WTC11 (cell line): ENCODE measurements at regions of chr11 and their contacts with region 1.

Region 1: DNA sequence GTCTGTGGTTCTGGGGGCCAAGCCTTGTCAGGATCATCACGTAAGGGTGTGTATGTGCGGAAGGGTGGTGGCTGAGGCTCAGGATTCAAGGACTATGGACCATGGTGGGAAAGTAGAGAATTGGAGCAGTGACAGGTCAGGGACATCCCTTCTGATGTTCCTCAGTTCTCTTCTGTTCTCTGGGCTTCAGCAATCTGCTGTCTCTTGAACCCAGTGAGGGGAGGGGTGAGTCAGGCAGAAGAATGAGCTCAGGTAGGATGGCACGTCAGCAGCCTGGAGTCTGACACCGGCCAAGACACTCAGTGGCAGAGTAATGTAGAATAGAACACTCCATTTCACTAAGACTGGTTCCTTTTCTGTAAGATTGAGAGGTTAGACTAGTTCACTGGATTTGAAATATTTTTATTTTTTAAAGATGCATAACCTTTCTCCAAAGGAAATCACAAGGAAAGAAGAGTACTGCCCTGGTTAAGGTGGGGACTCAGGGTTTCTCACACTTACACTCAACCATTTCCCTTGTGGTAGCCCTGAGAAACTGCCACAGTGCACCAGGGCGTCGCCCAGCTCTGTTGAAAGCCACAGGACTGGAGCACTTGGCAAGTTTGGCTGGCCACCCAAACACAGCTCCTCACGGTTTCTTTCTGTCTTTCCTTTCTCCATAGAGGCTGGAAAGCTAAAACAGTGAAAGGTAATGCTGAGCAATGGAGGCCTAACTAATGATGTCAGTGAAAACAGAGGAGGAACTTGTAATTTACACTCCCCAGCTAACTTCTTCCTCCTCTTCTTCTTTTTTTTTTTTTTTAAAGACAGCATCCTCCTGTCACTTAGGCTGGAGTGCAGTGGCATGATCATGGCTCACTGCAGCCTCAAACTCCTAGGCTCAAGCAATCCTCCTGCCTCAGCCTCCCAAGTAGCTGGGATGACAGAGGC is 23.1 kb upstream of the MICAL2 start:
- DNase-seq: no peak
- ATAC-seq: peak; percentile 50; the same call in 1 of the 2 replicates
- H3K4me3 Mint-ChIP-seq: no peak overlapping the region
- H3K27ac Mint-ChIP-seq: no peak overlapping the region
- H3K4me1 Mint-ChIP-seq: peaks cover 17% of the 10 kb centered on the region
- H3K27me3 Mint-ChIP-seq: no peaks in the 10 kb centered on the region
- CTCF ChIP-seq: no peak

Region 2: DNA sequence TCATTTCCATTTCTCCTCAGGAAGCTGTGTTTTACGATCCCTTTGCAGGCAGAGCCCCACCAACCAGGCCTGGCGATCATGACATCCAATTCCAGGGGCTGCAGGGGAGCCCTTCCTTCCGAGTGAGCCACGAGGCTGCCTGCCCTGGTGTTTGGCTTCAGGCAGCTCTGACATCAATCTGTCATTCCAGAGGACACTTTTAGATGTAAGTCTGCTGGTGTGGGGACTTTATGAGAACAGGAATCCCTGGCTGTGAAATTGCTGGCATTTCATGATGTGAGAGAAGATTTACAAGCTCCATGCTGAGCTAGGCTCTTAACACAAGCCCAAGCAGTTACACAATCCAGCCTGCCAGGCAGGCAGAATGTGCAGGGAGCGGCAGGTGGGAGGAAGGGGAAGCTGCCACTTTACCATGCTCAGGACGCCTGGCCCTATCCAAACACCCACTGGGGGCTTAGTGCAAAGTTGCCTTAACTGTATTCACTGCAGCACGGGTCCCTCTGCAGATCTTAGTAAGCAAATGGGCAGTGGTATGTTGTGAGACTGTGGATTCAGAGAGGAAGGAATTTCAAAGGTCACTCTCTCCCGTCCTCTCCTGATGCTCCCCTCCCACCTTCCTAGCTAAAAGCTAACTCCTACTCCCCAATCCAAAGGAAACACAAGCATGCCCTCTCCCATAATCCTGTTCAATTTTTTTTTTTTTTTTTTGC is 20.4 kb before region 1 on chr11:
- CTCF ChIA-PET with region 1: interaction called, 22 read pairs
- POLR2A ChIA-PET with region 1: no interaction called
- DNase-seq: no peak
- ATAC-seq: peak; percentile 78
- H3K4me3 Mint-ChIP-seq: no peak overlapping the region
- H3K27ac Mint-ChIP-seq: peak overlapping the region; percentile 4
- H3K4me1 Mint-ChIP-seq: peaks cover 26% of the 10 kb centered on the region
- H3K27me3 Mint-ChIP-seq: no peaks in the 10 kb centered on the region; the same call in 1 of the 2 replicates
- CTCF ChIP-seq: no peak

Region 3: DNA sequence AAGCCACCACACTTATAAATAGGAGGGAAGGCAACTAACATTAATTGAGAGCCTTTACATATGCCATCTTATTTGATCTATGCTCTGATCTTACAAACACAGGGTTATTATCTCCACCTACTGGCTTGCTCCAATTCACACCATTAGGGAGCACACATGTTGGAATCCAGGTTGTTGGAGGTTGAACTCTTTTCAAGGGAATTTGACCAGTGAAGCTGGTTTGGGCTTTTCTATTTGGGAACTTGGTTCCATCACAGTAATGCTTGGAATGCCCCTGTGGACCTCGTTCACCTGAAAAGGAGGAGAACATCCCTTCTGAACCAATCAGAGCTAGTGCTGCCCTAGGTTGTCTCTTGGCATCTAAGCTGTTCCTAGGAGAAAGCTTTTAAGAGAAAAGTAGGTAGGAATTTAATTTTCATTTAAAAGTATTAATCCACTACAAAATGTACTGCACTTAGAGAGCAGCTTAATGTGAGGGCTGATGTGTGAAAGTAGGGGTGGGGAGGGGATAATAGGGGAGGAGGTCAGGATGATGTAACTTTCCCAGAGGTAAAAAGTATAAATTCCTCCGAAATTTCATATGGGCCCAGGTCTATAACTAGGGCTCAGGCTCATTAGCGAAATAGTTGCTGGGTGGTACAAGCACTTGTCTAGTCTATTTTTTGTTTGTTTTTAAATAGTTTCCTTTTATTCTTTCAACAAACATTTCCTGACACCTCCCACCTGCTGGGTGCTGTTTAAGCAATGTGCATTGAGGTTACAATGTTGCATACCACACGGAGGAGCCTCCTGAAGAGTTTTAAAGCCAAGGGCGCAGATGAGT is 15.5 kb after region 1 on chr11:
- CTCF ChIA-PET with region 1: interaction called, 10 read pairs
- POLR2A ChIA-PET with region 1: no interaction called
- DNase-seq: no peak
- ATAC-seq: peak; percentile 40
- H3K4me3 Mint-ChIP-seq: peak overlapping the region; percentile 24; the same call in 1 of the 2 replicates
- H3K27ac Mint-ChIP-seq: no peak overlapping the region
- H3K4me1 Mint-ChIP-seq: peaks cover 26% of the 10 kb centered on the region
- H3K27me3 Mint-ChIP-seq: peaks cover 67% of the 10 kb centered on the region
- CTCF ChIP-seq: no peak